ENCODE measurements at regions of chr7 and their contacts with region 1.

Region 1: DNA sequence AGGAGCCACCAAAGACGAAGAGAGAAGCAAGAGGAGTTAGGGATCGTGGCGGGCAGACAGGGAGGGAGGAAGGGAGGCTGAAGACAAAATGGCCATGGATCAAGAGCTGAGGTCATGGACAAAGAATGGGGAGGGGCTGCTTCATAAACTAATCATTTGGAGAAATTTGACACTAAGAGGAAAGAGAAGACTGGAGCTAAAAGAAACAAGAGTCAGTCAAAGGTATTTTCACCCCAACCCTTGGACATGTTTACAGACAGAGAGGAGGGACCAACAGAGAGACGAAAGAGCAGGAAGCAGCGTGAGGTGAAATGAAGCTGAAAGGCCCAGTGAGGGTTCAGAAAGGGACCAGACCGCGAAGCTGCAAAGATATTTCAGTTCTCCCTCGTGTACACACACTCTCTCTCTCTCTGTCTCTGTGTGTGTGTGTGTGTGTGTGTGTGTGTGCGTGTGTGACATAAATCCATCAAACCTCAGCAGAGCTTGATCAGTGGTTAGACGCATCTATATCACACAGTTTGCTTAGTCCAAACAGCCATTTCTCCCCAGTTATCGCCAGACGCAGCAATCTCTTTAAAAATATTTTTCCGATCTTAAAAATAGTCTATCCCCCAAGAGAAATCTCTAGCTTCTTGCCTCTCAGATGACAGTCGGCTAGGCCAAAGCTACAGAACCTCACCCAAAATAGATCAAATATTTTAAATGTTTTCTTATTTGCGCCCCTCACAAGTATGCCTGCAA is 12.5 kb upstream of the CALD1 start:
- DNase-seq: peak; percentile 57
- ATAC-seq: peak; percentile 64
- H3K4me3 ChIP-seq: no peak overlapping the region
- H3K27ac ChIP-seq: peak overlapping the region; percentile 33; the same call in 1 of the 2 replicates
- H3K4me1 ChIP-seq: peaks cover 12% of the 10 kb centered on the region
- H3K27me3 ChIP-seq: no peaks in the 10 kb centered on the region
- CTCF ChIP-seq: no peak
- POLR2A ChIP-seq: no peak
- RAD21 ChIP-seq: no peak

Region 2: GRCh38 chr7:134695321-134695860 is 71.6 kb before region 1 on chr7:
- CTCF ChIA-PET with region 1: interaction called, 7 read pairs
- POLR2A ChIA-PET with region 1: interaction called, 3 read pairs
- dilution Hi-C with region 1: no loop called
- in situ Hi-C with region 1: loop called (anchors 5 kb)
- intact Hi-C with region 1: no loop called
- DNase-seq: no peak
- ATAC-seq: peak; percentile 12; the same call in 1 of the 2 replicates
- H3K4me3 ChIP-seq: no peak overlapping the region
- H3K27ac ChIP-seq: peak overlapping the region; percentile 64; the same call in 1 of the 2 replicates
- H3K4me1 ChIP-seq: peaks cover 26% of the 10 kb centered on the region
- H3K27me3 ChIP-seq: no peaks in the 10 kb centered on the region
- CTCF ChIP-seq: no peak
- POLR2A ChIP-seq: no peak
- RAD21 ChIP-seq: no peak

Region 3: DNA sequence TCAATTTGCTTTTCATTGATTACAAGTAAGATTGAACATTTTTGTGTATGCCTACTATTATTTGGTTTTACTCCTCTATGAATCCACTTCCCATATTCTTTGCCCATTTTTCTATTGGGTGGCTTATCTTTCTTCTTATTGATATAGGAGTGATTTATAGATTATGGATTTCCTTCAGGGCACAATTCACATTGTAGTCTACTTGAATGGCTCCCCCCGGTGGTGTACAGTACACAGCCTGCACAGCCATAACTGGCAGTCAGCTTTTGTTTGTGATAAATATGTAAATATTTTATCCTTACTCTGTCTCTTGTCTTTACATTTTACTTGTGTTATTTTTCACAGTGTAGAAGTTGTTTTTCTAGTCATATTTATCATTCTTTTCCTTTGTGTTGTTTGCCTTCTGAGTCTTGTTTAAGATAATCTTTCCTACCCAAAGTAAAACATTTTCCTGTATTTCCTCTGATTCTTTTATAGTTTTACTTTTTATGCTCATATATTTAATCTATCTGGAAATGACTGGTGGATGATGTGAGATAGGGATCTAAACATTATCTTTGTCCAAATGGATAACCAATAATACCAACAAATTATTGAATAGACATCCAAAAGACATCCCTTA is 11.4 kb before region 1 on chr7:
- CTCF ChIA-PET with region 1: interaction called, 11 read pairs
- POLR2A ChIA-PET with region 1: no interaction called
- dilution Hi-C with region 1: no loop called
- in situ Hi-C with region 1: no loop called
- intact Hi-C with region 1: no loop called
- DNase-seq: no peak
- ATAC-seq: peak; percentile 78
- H3K4me3 ChIP-seq: no peak overlapping the region
- H3K27ac ChIP-seq: no peak overlapping the region
- H3K4me1 ChIP-seq: peaks cover 5% of the 10 kb centered on the region; the same call in 1 of the 2 replicates
- H3K27me3 ChIP-seq: no peaks in the 10 kb centered on the region
- CTCF ChIP-seq: peak; percentile 68
- POLR2A ChIP-seq: no peak
- RAD21 ChIP-seq: peak; percentile 63